Activated CD4-positive, alpha-beta T cell treated with anti-CD3 and anti-CD28 coated beads for 36 hours (primary cell): ENCODE measurements at regions of chr11 and their contacts with region 1.

Region 1: DNA sequence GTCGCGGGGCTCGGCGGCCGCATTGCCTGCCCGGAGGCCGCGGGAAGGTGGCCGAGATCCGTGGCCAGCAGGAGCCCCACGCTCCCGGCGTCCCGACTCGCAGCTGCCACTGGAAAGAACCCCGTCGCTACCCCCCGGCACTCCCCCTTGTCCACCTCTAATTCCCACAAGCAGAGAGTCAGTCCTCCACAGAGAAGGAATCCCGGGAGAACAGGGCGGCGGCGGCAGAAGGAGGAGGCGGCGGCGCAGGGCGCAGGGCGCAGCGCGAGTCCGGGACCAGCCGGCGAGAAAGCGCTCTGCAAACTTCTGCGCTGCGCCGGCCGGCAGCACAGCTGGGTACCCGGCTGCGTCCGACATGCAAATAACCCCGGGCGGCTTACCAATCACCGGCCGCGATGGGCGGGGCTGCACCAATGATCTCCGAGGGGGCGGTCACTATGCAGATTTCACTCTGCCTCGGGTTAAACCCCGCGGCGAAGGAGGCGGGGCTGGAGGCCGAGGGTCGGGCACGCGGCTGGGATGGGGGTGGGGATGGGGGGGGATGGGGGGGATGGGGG is at the start of gene ABTB2:
- DNase-seq: peak; percentile 99
- ATAC-seq: peak; percentile 95
- H3K4me3 Mint-ChIP-seq: peak within 1 kb of the TSS; percentile 78
- H3K27ac Mint-ChIP-seq: peak within 1 kb of the TSS; percentile 67
- H3K4me1 Mint-ChIP-seq: peaks cover 28% of the 10 kb centered on the region
- H3K27me3 Mint-ChIP-seq: peaks cover 36% of the 10 kb centered on the region
- total RNA-seq, gene ABTB2: 1.2 TPM

Region 2: GRCh38 chr11:33857933-33858371 is 499.8 kb before region 1 on chr11:
- CTCF ChIA-PET with region 1: interaction called, 4 read pairs
- POLR2A ChIA-PET with region 1: no interaction called
- intact Hi-C with region 1: loop called (anchors 2 to 10 kb)
- DNase-seq: peak; percentile 88
- ATAC-seq: peak; percentile 88
- H3K4me3 Mint-ChIP-seq: no peak overlapping the region
- H3K27ac Mint-ChIP-seq: no peak overlapping the region
- H3K4me1 Mint-ChIP-seq: no peaks in the 10 kb centered on the region
- H3K27me3 Mint-ChIP-seq: peaks cover 32% of the 10 kb centered on the region

Region 3: GRCh38 chr11:34105079-34105956 is 252.5 kb before region 1 on chr11 and contains the start of gene NAT10:
- CTCF ChIA-PET with region 1: interaction called, 4 read pairs
- POLR2A ChIA-PET with region 1: no interaction called
- intact Hi-C with region 1: loop called (anchors 1 to 2 kb)
- DNase-seq: peak; percentile 98
- ATAC-seq: peak; percentile 93
- H3K4me3 Mint-ChIP-seq: peak within 1 kb of the TSS; percentile 97
- H3K27ac Mint-ChIP-seq: peak within 1 kb of the TSS; percentile 99
- H3K4me1 Mint-ChIP-seq: peaks cover 57% of the 10 kb centered on the region
- H3K27me3 Mint-ChIP-seq: no peaks in the 10 kb centered on the region
- total RNA-seq, gene NAT10: 142 to 147 TPM

Region 4: DNA sequence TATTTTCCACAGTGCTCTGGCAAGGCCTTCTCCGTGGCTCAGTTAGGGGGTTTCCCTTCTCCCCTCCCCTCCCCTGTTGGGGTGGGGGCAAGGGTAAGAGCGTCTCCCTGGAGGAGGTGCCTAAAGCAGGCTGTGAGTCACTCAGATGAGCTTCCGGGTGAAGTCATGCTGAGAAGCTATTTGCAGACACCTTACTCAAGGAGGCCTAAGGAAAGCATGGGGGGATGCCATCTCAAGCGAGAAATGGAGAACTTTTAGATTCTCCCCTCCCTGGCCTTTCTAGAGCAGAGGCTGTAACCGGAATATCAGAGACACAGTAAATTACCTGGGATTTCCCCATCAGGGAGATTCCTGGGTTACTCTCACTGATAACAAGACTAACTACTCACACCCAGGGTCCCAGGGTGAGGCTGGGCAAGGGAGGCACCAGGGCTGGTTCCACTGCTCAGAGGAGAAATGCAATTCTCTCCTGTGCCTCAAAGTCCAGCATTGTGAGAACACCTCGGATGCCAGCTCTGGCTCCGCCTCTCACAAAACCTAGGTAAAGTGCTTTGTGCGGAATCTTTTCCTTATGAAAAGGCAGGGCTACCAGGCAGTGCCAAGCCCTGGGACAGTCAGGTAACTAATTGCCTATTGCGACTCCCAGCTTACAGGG is 123.6 kb before region 1 on chr11:
- CTCF ChIA-PET with region 1: interaction called, 3 read pairs
- POLR2A ChIA-PET with region 1: interaction called, 10 read pairs
- intact Hi-C with region 1: loop called (anchors 1 kb)
- DNase-seq: peak; percentile 89
- ATAC-seq: peak; percentile 93
- H3K4me3 Mint-ChIP-seq: peak overlapping the region; percentile 16
- H3K27ac Mint-ChIP-seq: peak overlapping the region; percentile 72
- H3K4me1 Mint-ChIP-seq: peaks cover 44% of the 10 kb centered on the region
- H3K27me3 Mint-ChIP-seq: peaks cover 3% of the 10 kb centered on the region

Region 5: DNA sequence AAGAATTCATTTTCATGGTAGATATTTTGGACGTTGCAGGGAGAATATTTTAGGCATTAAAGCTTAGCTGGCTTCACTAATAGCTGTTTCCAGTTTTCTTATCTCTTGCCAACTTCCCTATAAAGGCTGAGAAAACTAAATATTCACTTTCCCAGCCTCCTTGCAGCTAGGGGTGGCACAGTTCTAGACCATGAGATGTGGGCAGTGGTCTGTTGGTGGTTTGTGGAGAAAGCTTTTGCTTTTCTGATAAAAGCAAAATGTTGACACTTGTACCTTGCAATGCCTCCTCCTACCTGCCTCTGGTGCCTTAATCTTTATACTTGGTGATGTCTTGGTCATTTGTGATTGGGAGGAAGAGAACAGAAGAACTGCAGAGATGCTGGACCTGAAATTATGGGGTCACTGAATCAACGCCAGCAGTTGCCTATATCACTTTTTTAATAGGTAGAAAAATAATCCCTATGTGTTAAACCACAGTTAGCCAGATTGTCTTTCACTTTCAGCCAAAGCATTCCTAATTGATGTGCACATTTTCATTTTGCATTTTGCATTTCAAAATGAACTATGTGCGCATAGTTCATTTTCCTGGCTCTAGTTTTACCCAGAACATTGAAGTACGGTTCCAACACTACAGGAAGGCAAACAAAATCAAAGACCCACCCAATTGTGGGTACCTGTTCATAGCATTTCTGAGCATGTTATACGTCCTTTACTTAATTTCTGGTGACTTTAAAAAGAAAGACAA is 24.9 kb after region 1 on chr11:
- CTCF ChIA-PET with region 1: no interaction called
- POLR2A ChIA-PET with region 1: no interaction called
- intact Hi-C with region 1: no loop called
- DNase-seq: no peak
- ATAC-seq: no peak
- H3K4me3 Mint-ChIP-seq: no peak overlapping the region
- H3K27ac Mint-ChIP-seq: no peak overlapping the region
- H3K4me1 Mint-ChIP-seq: peaks cover 3% of the 10 kb centered on the region
- H3K27me3 Mint-ChIP-seq: peaks cover 7% of the 10 kb centered on the region

Region 6: GRCh38 chr11:34394771-34395300 is 37.1 kb after region 1 on chr11:
- CTCF ChIA-PET with region 1: no interaction called
- POLR2A ChIA-PET with region 1: no interaction called
- intact Hi-C with region 1: no loop called
- DNase-seq: no peak
- ATAC-seq: no peak
- H3K4me3 Mint-ChIP-seq: no peak overlapping the region
- H3K27ac Mint-ChIP-seq: no peak overlapping the region
- H3K4me1 Mint-ChIP-seq: no peaks in the 10 kb centered on the region
- H3K27me3 Mint-ChIP-seq: peaks cover 26% of the 10 kb centered on the region

Region 7: DNA sequence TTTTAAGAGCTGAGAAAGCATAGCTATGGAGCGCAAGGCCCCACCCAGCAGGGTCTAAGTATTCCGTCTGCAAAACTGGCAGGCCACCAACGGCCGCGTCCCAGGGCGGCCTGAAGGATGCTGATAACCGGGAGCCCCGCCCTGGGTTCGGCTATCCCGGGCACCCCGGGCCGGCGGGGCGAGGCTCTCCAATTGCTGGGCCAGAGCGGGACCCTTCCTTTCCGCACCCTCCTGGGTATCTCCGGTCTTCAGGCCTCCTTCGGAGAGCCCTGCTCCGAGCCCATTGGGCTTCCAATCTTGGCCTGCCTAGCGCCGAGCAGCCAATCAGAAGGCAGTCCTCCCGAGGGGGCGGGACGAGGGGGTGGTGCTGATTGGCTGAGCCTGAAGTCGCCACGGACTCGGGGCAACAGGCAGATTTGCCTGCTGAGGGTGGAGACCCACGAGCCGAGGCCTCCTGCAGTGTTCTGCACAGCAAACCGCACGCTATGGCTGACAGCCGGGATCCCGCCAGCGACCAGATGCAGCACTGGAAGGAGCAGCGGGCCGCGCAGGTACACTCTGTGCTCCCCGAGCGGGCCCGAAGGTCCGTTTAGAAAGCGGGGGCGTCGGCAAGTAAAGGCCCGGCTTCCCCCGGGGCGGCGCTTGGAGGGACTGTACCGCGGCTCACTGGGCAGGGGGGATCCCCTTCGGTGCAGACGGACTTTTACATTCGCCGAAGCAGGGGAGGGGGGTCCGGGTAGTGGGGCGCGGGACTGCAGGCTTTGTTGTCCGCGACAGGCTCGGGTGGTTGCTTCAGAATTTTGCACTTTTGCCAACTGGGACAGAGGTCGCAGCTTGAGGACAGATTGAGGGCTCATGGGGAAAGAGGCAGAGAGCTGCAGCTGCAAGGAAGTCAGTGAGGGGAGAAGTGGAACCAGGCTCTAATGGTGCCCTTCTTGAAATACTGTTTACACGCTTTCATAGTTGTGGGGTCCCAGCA is 81.0 kb after region 1 on chr11 and contains the start of gene CAT:
- CTCF ChIA-PET with region 1: interaction called, 3 read pairs
- POLR2A ChIA-PET with region 1: no interaction called
- intact Hi-C with region 1: loop called in 1 of 2 experiments (anchors 1 kb)
- DNase-seq: peak; percentile 99
- ATAC-seq: peak; percentile 99
- H3K4me3 Mint-ChIP-seq: peak within 1 kb of the TSS; percentile 86
- H3K27ac Mint-ChIP-seq: peak within 1 kb of the TSS; percentile 93
- H3K4me1 Mint-ChIP-seq: peaks cover 22% of the 10 kb centered on the region
- H3K27me3 Mint-ChIP-seq: no peaks in the 10 kb centered on the region
- total RNA-seq, gene CAT: 25.1 to 25.5 TPM

Region 8: DNA sequence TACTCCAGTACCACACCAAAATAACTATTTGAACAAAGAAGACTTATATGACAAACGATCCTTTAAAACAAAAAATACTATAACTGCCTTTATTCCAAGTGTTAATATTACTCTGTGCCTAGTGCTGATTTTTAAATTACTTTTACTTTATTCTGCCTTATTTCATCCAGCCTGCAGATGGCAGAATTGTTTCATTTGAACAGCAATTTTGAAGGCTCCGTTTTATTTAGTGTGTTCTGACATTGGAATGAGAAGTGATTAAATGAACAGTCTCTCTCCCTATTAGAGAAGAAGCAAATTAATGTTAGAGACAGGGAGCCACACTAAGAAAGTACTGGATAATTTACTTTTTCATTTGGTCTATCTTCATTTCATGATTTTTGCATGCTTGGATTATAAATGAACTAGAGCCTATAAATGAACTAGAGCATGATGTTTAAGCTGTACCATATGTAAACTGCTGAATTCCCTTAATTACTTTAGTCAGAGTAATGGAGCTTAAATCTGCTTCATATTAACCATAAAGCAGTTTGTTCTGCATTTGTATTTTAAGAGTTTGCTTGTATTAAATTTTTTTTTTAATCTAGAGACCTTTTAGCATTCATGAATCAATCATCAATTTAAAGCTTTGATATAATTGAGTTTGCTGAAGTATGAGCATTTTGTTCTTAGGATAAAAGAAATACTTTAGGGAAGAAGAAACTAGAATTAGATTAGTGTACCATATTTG is 568.5 kb after region 1 on chr11:
- CTCF ChIA-PET with region 1: no interaction called
- POLR2A ChIA-PET with region 1: no interaction called
- intact Hi-C with region 1: no loop called
- DNase-seq: peak; percentile 8
- ATAC-seq: peak; percentile 68
- H3K4me3 Mint-ChIP-seq: no peak overlapping the region
- H3K27ac Mint-ChIP-seq: no peak overlapping the region
- H3K4me1 Mint-ChIP-seq: peaks cover 20% of the 10 kb centered on the region
- H3K27me3 Mint-ChIP-seq: no peaks in the 10 kb centered on the region